Common myeloid progenitor, CD34-positive (primary cell): ENCODE measurements at regions of chr1 and their contacts with region 1.

Region 1: GRCh38 chr1:149940427-149940826 is 3.7 kb upstream of the MTMR11 start:
- DNase-seq: no peak
- H3K4me3 ChIP-seq: no peak overlapping the region
- H3K27ac ChIP-seq: no peak overlapping the region
- H3K4me1 ChIP-seq: peaks cover 0 to 24% (median 13%) of the 10 kb centered on the region in 4 experiments
- H3K27me3 ChIP-seq: no peaks in the 10 kb centered on the region

Region 2: GRCh38 chr1:149927503-149928387 is 12.7 kb before region 1 on chr1 and contains the start of gene SF3B4:
- CTCF ChIA-PET with region 1: interaction called, 12 read pairs
- POLR2A ChIA-PET with region 1: interaction called, 3 read pairs
- DNase-seq: peak; percentile 95 to 97 (median 96)
- H3K4me3 ChIP-seq: peak within 1 kb of the TSS; percentile 85 to 99 (median 90)
- H3K27ac ChIP-seq: peak within 1 kb of the TSS; percentile 88 to 92
- H3K4me1 ChIP-seq: peaks cover 7 to 33% (median 18%) of the 10 kb centered on the region in 4 experiments
- H3K27me3 ChIP-seq: no peaks in the 10 kb centered on the region

Region 3: GRCh38 chr1:150233359-150234308 is 293.2 kb after region 1 on chr1:
- CTCF ChIA-PET with region 1: no interaction called
- POLR2A ChIA-PET with region 1: no interaction called
- DNase-seq: peak; percentile 26 to 62 (median 58)
- H3K4me3 ChIP-seq: peak overlapping the region in 6 of 7 experiments; percentile 90 to 100 (median 94)
- H3K27ac ChIP-seq: peak overlapping the region; percentile 84 to 94
- H3K4me1 ChIP-seq: peaks cover 10 to 24% (median 18%) of the 10 kb centered on the region in 4 experiments
- H3K27me3 ChIP-seq: no peaks in the 10 kb centered on the region